ENCODE measurements at regions of chr19 and their contacts with region 1.

Region 1: DNA sequence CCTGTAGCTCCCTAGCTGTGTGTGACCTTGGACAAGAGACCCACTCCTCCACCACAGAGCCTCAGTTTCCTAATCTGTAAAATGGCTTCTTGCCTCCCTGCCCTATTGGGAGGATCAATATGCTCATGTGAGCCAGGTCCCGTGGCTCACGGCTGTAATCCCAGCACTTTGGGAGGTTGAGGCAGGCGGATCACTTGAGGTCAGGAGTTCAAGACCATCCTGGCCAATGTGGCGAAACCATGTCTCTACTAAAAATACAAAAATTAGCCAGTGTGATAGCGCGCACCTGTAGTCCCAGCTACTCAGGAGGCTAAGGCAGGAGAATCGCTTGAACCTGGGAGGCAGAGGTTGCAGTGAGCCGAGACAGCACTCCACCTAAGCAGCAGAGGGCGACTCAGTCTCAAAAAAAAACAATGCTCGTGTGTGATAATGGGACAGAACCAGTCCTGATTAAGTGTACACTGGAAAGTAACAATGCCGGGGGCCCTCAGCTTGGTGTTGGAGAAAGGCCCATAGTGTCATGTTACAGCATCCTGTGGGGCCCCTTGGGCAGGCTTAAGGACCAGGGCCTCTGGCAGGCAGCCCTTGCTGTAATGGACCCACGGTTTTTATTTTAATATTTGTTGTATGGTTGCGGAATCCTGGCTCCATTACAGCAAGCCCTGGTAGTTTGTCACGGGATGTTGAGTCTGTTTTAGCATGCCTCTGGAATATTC is 6.8 kb downstream of the RPS11 start:
- DNase-seq: no peak
- ATAC-seq: no peak
- H3K4me3 Mint-ChIP-seq: no peak overlapping the region
- H3K27ac Mint-ChIP-seq: no peak overlapping the region
- H3K4me1 Mint-ChIP-seq: peaks cover 31% of the 10 kb centered on the region
- H3K27me3 Mint-ChIP-seq: no peaks in the 10 kb centered on the region; the same call in 1 of the 2 replicates
- CTCF ChIP-seq: peak; percentile 29; the same call in 1 of the 2 replicates

Region 2: GRCh38 chr19:49528211-49528771 is 25.3 kb after region 1 on chr19:
- CTCF ChIA-PET with region 1: interaction called, 16 read pairs
- POLR2A ChIA-PET with region 1: interaction called, 3 read pairs
- DNase-seq: peak; percentile 26
- ATAC-seq: peak; percentile 25; the same call in 1 of the 2 replicates
- H3K4me3 Mint-ChIP-seq: peak overlapping the region; percentile 70
- H3K27ac Mint-ChIP-seq: no peak overlapping the region
- H3K4me1 Mint-ChIP-seq: peaks cover 21% of the 10 kb centered on the region
- H3K27me3 Mint-ChIP-seq: peaks cover 19% of the 10 kb centered on the region
- CTCF ChIP-seq: no peak

Region 3: GRCh38 chr19:49533551-49534488 is 30.8 kb after region 1 on chr19:
- CTCF ChIA-PET with region 1: interaction called, 23 read pairs
- POLR2A ChIA-PET with region 1: interaction called, 3 read pairs
- DNase-seq: peak; percentile 82
- ATAC-seq: peak; percentile 75
- H3K4me3 Mint-ChIP-seq: peak overlapping the region; percentile 71
- H3K27ac Mint-ChIP-seq: no peak overlapping the region
- H3K4me1 Mint-ChIP-seq: peaks cover 17% of the 10 kb centered on the region
- H3K27me3 Mint-ChIP-seq: peaks cover 22% of the 10 kb centered on the region
- CTCF ChIP-seq: no peak

Measured in WTC11 (cell line).